ENCODE measurements at regions of chr17 and their contacts with region 1.

Region 1: DNA sequence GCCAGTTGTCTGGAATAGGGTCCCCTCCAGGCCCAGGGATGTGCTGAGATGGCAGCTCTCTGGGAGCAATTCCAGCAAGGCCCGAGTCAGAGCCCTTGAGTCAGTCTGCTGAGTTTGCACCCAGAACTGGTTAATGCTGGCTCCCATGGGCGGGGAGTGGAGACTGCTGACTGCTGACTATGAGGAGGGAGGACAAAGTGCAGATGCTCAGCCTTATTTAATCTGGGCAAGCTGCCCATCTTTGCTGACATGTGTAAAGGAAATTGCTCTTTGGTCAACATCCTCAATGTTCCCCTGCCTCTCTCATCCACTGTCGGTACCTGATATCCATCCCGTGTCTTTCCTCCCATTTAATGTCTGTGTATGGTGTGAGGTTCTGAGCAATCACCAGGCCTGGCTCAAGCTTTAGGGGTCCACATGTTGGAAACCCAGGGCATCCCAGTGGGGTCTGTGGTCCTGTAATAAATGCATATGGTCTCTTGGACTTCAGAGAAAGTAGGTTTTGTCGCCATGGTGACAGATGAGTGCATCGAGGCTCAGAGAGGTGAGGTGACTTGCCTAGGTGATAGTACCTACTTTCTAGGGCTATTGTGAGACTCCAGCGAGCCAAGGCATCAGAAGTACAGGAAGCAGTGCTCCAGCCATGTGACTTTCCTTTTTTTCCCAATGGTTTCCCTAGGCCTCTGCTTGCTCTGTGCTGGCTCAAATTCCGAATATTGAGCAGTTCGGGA is 20.0 kb upstream of the RNF135 start:
- H3K4me3 Mint-ChIP-seq: peak overlapping the region; percentile 17
- H3K27ac Mint-ChIP-seq: peak overlapping the region; percentile 97
- H3K4me1 Mint-ChIP-seq: peaks cover 68% of the 10 kb centered on the region
- H3K27me3 Mint-ChIP-seq: no peaks in the 10 kb centered on the region

Region 2: GRCh38 chr17:30961209-30962188 is 10.7 kb after region 1 on chr17:
- intact Hi-C with region 1: loop called (anchors 1 kb)
- H3K4me3 Mint-ChIP-seq: peak overlapping the region; percentile 60
- H3K27ac Mint-ChIP-seq: peak overlapping the region; percentile 97
- H3K4me1 Mint-ChIP-seq: peaks cover 72% of the 10 kb centered on the region
- H3K27me3 Mint-ChIP-seq: no peaks in the 10 kb centered on the region

Region 3: GRCh38 chr17:30970831-30971567 is 20.2 kb after region 1 on chr17 and contains the start of gene RNF135:
- intact Hi-C with region 1: loop called (anchors 1 kb)
- H3K4me3 Mint-ChIP-seq: peak within 1 kb of the TSS; percentile 98
- H3K27ac Mint-ChIP-seq: peak within 1 kb of the TSS; percentile 94
- H3K4me1 Mint-ChIP-seq: peaks cover 51% of the 10 kb centered on the region
- H3K27me3 Mint-ChIP-seq: no peaks in the 10 kb centered on the region

Region 4: GRCh38 chr17:31321481-31321880 is 370.6 kb after region 1 on chr17 and contains the start of gene EVI2A:
- intact Hi-C with region 1: loop called (anchors 5 kb)
- H3K4me3 Mint-ChIP-seq: peak within 1 kb of the TSS; percentile 69
- H3K27ac Mint-ChIP-seq: peak within 1 kb of the TSS; percentile 87
- H3K4me1 Mint-ChIP-seq: peaks cover 28% of the 10 kb centered on the region
- H3K27me3 Mint-ChIP-seq: no peaks in the 10 kb centered on the region

Measured in dendritic cell treated with granulocyte-macrophage colony-stimulating factor and Interleukin-4, amounts not matched to agents 40 ng/mL and 50 ng/mL, for 4 days (primary cell).